Activated T-helper 2 cell treated with anti-CD3 and anti-CD28 coated beads, Interferon-gamma antibody, Interleukin-2, Interleukin-4, amounts not matched to agents 10 μg/mL and 5 μg/mL and 100 μg/mL, durations not matched to agents 14 hours and 24 hours and 36 hours (primary cell): ENCODE measurements at regions of chr9 and their contacts with region 1.

Region 1: GRCh38 chr9:95510709-95511615 is 5.8 kb downstream of the PTCH1 start:
- DNase-seq: peak; percentile 82
- H3K4me3 Mint-ChIP-seq: peak overlapping the region; percentile 88
- H3K27ac Mint-ChIP-seq: peak overlapping the region; percentile 81
- H3K4me1 Mint-ChIP-seq: peaks cover 30% of the 10 kb centered on the region
- H3K27me3 Mint-ChIP-seq: peaks cover 46% of the 10 kb centered on the region

Region 2: GRCh38 chr9:95317119-95317892 is 193.7 kb before region 1 on chr9 and contains the start of gene FANCC:
- intact Hi-C with region 1: loop called (anchors 2 kb)
- DNase-seq: peak; percentile 78
- H3K4me3 Mint-ChIP-seq: peak within 1 kb of the TSS; percentile 90
- H3K27ac Mint-ChIP-seq: peak within 1 kb of the TSS; percentile 95
- H3K4me1 Mint-ChIP-seq: peaks cover 27% of the 10 kb centered on the region
- H3K27me3 Mint-ChIP-seq: peaks cover 10% of the 10 kb centered on the region
- total RNA-seq, gene FANCC: 12.6 and 16.8 TPM in 2 replicates

Region 3: GRCh38 chr9:95462249-95463147 is 48.5 kb before region 1 on chr9:
- intact Hi-C with region 1: loop called (anchors 1 kb)
- DNase-seq: peak; percentile 81
- H3K4me3 Mint-ChIP-seq: peak overlapping the region; percentile 71
- H3K27ac Mint-ChIP-seq: peak overlapping the region; percentile 21
- H3K4me1 Mint-ChIP-seq: peaks cover 29% of the 10 kb centered on the region
- H3K27me3 Mint-ChIP-seq: peaks cover 43% of the 10 kb centered on the region

Region 4: DNA sequence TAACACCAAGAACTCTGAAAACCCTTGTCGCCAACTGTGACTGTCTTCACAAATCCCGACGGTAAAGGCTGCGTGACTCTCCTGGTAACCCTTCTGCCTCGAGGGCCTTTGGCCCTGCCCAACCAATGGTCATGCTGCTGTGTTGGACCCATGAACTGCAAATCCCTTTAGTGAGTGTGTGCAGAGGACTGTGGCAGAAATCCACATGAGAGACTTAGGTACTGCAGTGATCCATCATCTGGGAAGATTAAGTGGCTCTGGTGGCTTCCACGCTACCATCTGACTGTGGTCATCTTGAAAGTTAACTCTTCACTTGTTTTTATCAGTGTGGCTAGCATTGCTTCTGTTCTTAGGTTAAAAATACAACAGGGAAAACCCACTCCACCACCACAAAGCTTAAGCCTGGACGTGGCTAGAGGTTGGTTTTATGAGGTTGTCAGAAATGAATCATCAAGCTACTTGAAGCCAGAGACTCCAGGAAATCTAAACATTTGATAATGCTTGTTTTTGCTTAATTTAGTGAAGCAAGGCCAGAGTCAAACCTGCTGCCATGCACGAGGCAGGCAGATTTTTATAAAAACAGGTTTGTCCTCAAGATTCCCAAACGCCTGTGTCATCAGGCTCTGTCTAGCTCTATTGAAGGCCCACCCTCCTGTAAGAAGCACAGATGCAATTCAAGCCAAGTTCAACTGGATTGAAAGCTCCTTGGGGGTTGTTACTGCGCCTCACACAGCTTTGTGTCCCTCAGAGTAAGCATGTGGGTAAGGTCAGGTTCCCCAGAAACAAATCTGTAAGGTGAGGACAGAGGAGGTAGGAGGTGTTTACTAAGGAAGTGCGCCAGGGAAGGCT is 311.8 kb after region 1 on chr9:
- intact Hi-C with region 1: loop called (anchors 5 kb)
- DNase-seq: peak; percentile 40
- H3K4me3 Mint-ChIP-seq: no peak overlapping the region
- H3K27ac Mint-ChIP-seq: peak overlapping the region; percentile 18
- H3K4me1 Mint-ChIP-seq: peaks cover 40% of the 10 kb centered on the region
- H3K27me3 Mint-ChIP-seq: peaks cover 39% of the 10 kb centered on the region

Region 5: GRCh38 chr9:96020792-96021550 is 510.0 kb after region 1 on chr9:
- intact Hi-C with region 1: loop called (anchors 5 kb)
- DNase-seq: peak; percentile 54
- H3K4me3 Mint-ChIP-seq: peak overlapping the region; percentile 79
- H3K27ac Mint-ChIP-seq: peak overlapping the region; percentile 91
- H3K4me1 Mint-ChIP-seq: peaks cover 75% of the 10 kb centered on the region
- H3K27me3 Mint-ChIP-seq: no peaks in the 10 kb centered on the region

Region 6: DNA sequence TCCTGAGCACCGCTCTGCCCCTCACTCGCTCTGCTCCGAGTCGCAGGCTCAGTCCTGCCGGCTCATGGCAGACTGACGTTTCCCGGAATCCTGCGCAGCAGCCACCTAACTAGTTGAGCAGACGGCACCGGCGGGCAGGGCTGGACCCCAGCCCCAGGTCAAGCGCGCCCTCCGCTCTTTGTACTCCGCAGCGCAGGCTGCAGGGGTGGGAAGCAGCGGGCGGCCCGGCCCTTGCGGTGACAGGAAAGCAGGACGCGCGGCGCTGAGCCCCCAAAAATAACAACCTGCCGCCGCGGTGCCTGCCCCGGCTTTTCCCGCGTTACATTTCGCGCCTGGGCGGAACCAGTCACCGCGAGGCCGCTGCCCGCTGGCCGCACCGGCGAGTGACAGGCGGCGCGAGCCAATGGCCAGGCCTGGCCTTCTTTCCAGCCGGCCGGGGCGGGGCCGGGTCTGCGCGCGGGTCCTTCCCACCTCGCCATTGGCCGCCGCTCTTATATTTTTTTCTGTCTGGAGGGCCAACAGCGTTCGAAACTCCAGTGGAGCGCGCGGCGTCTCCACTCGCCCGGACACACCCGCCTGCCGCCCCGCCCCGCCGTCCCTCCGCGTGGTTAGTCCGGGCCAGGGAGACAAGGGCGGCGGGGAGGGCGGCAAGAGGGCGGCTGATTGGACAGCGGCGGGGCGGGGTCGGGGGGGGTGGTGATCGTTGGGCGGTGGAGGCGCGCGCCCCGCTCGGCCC is 907.3 kb after region 1 on chr9 and contains the start of gene ZNF367:
- intact Hi-C with region 1: loop called (anchors 5 kb)
- DNase-seq: peak; percentile 95
- H3K4me3 Mint-ChIP-seq: peak within 1 kb of the TSS; percentile 89
- H3K27ac Mint-ChIP-seq: peak within 1 kb of the TSS; percentile 91
- H3K4me1 Mint-ChIP-seq: peaks cover 30% of the 10 kb centered on the region
- H3K27me3 Mint-ChIP-seq: no peaks in the 10 kb centered on the region
- total RNA-seq, gene ZNF367: 19.5 and 19.6 TPM in 2 replicates